CD8-positive, alpha-beta T cell (primary cell): ENCODE measurements at regions of chr15 and their contacts with region 1.

Region 1: DNA sequence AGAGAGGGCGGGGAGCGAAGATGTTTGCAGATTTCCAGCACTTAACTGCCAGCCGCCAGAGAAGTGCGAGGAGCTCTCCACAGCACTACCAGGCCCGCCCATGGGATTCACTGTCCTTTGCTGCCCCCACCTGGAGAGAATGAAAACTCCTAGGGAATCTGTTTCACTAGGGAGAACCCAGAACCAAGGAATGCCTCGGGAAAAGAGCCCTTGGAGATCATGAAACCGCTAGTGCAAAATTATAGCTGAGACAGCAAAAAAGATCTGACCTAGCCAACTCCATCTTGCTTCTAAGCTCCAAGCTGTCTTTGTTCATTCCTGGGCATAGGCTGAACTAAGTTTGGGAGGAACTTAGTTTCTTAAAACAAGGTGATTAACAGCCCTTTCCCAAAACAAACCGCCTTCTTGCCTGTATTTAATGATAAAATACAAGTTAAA is 82.6 kb upstream of the GCNT3 start:
- DNase-seq: peak; percentile 32 to 82 (median 72)
- ATAC-seq: peak; percentile 81
- H3K4me3 ChIP-seq: no peak overlapping the region
- H3K4me3 Mint-ChIP-seq: no peak overlapping the region
- H3K27ac ChIP-seq: no peak overlapping the region
- H3K27ac Mint-ChIP-seq: no peak overlapping the region
- H3K4me1 ChIP-seq: peaks cover 13% of the 10 kb centered on the region
- H3K4me1 Mint-ChIP-seq: peaks cover 23% of the 10 kb centered on the region
- H3K27me3 ChIP-seq: peaks cover 0 to 2% of the 10 kb centered on the region in 2 experiments
- H3K27me3 Mint-ChIP-seq: peaks cover 4% of the 10 kb centered on the region
- CTCF ChIP-seq: peak; percentile 73

Region 2: GRCh38 chr15:57866149-57866736 is 1662.7 kb before region 1 on chr15:
- CTCF ChIA-PET with region 1: no interaction called
- POLR2A ChIA-PET with region 1: no interaction called
- intact Hi-C with region 1: loop called in 1 of 2 experiments (anchors 10 kb)
- DNase-seq: peak in 8 of 9 experiments; percentile 8 to 49 (median 24)
- ATAC-seq: no peak
- H3K4me3 ChIP-seq: no peak overlapping the region
- H3K4me3 Mint-ChIP-seq: no peak overlapping the region
- H3K27ac ChIP-seq: no peak overlapping the region
- H3K27ac Mint-ChIP-seq: no peak overlapping the region
- H3K4me1 ChIP-seq: peaks cover 10% of the 10 kb centered on the region
- H3K4me1 Mint-ChIP-seq: peaks cover 9% of the 10 kb centered on the region
- H3K27me3 ChIP-seq: peaks cover 0 to 4% of the 10 kb centered on the region in 2 experiments
- H3K27me3 Mint-ChIP-seq: peaks cover 31% of the 10 kb centered on the region
- CTCF ChIP-seq: peak; percentile 67

Region 3: GRCh38 chr15:58951388-58952007 is 577.5 kb before region 1 on chr15:
- CTCF ChIA-PET with region 1: interaction called, 10 read pairs
- POLR2A ChIA-PET with region 1: no interaction called
- intact Hi-C with region 1: no loop called
- DNase-seq: no peak
- ATAC-seq: no peak
- H3K4me3 ChIP-seq: no peak overlapping the region
- H3K4me3 Mint-ChIP-seq: no peak overlapping the region
- H3K27ac ChIP-seq: no peak overlapping the region
- H3K27ac Mint-ChIP-seq: no peak overlapping the region
- H3K4me1 ChIP-seq: no peaks in the 10 kb centered on the region
- H3K4me1 Mint-ChIP-seq: peaks cover 5% of the 10 kb centered on the region
- H3K27me3 ChIP-seq: no peaks in the 10 kb centered on the region
- H3K27me3 Mint-ChIP-seq: no peaks in the 10 kb centered on the region
- CTCF ChIP-seq: no peak

Region 4: DNA sequence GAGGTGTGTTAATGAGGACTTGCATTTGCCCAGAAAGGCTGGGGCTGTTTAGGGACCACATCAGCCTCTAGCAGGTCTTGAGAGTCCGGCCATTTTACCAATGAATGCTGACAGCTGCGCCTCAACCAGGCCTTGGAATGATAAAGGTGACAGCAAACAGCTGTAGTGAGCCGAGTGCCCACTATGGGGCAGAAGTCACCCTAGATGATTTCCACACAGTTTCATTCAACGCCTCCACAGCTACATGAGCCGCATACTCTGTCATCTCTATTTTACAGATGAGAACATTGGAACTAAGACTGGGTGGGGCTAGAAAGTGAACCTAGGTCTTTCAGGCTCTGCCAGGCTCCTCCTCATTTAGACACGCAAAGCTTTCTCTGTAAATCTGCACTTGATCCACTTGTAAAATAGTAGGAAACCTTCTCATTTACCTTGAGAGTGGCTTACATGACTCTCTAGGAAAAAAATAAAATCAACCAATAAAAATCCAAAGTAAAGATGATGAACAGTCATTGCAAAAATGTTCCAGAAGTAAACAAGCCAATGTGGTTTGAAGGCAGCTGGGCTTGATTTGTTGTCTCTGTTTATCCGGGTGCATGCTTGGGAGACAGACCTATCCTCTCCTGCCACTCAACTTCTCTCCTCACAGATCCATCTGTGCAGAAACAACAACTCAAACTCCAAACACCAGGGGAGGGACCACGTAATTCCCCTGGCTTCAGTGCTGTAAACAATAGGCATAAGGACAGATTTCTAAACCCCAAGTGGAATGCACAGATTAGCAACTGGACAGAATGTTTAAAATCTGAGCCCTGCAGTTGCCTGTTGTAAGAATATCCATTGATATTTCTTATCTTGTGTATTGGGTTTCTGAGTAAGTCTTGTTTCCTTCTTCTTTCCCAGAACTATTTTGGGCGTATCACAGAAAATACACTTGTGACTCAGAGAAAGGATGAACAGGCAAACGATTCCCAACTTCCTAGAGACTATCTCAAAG is 353.9 kb before region 1 on chr15:
- CTCF ChIA-PET with region 1: interaction called, 4 read pairs
- POLR2A ChIA-PET with region 1: interaction called, 3 read pairs
- intact Hi-C with region 1: loop called in 1 of 2 experiments (anchors 10 kb)
- DNase-seq: peak in 3 of 9 experiments; percentile 7 to 39 (median 39)
- ATAC-seq: peak; percentile 38
- H3K4me3 ChIP-seq: no peak overlapping the region
- H3K4me3 Mint-ChIP-seq: no peak overlapping the region
- H3K27ac ChIP-seq: no peak overlapping the region
- H3K27ac Mint-ChIP-seq: no peak overlapping the region
- H3K4me1 ChIP-seq: no peaks in the 10 kb centered on the region
- H3K4me1 Mint-ChIP-seq: no peaks in the 10 kb centered on the region
- H3K27me3 ChIP-seq: no peaks in the 10 kb centered on the region
- H3K27me3 Mint-ChIP-seq: peaks cover 4% of the 10 kb centered on the region
- CTCF ChIP-seq: no peak

Region 5: GRCh38 chr15:59501597-59501996 is 27.4 kb before region 1 on chr15:
- CTCF ChIA-PET with region 1: interaction called, 53 read pairs
- POLR2A ChIA-PET with region 1: interaction called, 4 read pairs
- intact Hi-C with region 1: loop called in 1 of 2 experiments (anchors 2 kb)
- DNase-seq: peak in 2 of 9 experiments; percentile 24 to 35
- ATAC-seq: no peak
- H3K4me3 ChIP-seq: no peak overlapping the region
- H3K4me3 Mint-ChIP-seq: no peak overlapping the region
- H3K27ac ChIP-seq: no peak overlapping the region
- H3K27ac Mint-ChIP-seq: no peak overlapping the region
- H3K4me1 ChIP-seq: no peaks in the 10 kb centered on the region
- H3K4me1 Mint-ChIP-seq: no peaks in the 10 kb centered on the region
- H3K27me3 ChIP-seq: no peaks in the 10 kb centered on the region
- H3K27me3 Mint-ChIP-seq: peaks cover 9% of the 10 kb centered on the region
- CTCF ChIP-seq: no peak

Region 6: GRCh38 chr15:59642351-59642750 is 113.4 kb after region 1 on chr15:
- CTCF ChIA-PET with region 1: interaction called, 11 read pairs
- POLR2A ChIA-PET with region 1: no interaction called
- intact Hi-C with region 1: no loop called
- DNase-seq: no peak
- ATAC-seq: no peak
- H3K4me3 ChIP-seq: no peak overlapping the region
- H3K4me3 Mint-ChIP-seq: no peak overlapping the region
- H3K27ac ChIP-seq: no peak overlapping the region
- H3K27ac Mint-ChIP-seq: no peak overlapping the region
- H3K4me1 ChIP-seq: no peaks in the 10 kb centered on the region
- H3K4me1 Mint-ChIP-seq: no peaks in the 10 kb centered on the region
- H3K27me3 ChIP-seq: no peaks in the 10 kb centered on the region
- H3K27me3 Mint-ChIP-seq: no peaks in the 10 kb centered on the region
- CTCF ChIP-seq: peak; percentile 21